Naive thymus-derived CD4-positive, alpha-beta T cell (primary cell): ENCODE measurements at regions of chr4 and their contacts with region 1.

Region 1: DNA sequence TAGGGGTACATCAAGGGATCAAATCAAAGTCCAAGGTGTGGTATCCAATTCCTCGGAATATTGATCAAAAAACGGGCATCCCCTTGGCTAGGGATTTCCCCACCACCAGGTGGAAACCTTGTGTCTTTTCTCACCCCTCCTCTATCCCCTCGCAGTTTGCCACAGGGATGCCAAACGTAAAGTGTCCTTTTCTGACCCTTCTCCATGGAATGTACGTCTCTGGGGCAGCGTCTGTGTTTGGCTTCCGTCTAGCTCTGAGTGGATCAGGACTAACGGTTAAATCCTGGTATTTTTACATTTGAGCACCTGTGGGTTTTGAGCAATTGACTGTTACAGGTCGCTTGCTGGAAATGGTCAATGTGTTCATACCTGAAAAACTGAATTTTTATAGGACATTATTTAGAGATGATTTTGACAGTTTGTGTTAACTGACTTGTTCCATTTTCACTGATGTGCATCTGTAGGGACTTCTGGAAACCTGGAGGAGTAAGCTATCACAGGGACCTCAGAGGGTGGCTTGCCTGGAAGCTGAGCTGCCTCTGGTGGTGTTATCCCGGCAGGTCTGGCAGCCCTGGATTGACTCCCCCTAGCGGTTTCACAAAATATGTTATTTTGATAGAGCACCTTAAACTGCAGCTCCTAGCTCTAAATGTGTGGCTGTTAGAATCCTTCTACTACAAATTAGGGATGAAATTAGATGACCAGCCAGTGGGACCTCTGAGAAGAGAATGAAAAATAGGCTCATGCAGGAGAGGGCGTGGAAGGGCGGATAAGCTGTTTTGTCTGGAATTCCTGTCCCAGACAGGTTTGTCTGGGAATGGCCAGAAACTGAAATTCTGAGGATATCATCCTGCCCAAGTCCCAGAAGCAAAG is 8.8 kb upstream of the MGST2 start:
- DNase-seq: peak in 8 of 9 donors; percentile 29 to 67 (median 56)
- ATAC-seq: peak; percentile 87
- H3K4me3 ChIP-seq: no peak overlapping the region
- H3K4me3 Mint-ChIP-seq: peak overlapping the region in 8 of 10 donors; percentile 5 to 86 (median 22)
- H3K27ac ChIP-seq: no peak overlapping the region
- H3K27ac Mint-ChIP-seq: peak overlapping the region in 5 of 9 donors; percentile 31 to 98 (median 87)
- H3K4me1 ChIP-seq: peaks cover 0 to 5% of the 10 kb centered on the region in 2 donors
- H3K4me1 Mint-ChIP-seq: peaks cover 17 to 41% (median 18%) of the 10 kb centered on the region in 7 donors
- H3K27me3 ChIP-seq: no peaks in the 10 kb centered on the region
- H3K27me3 Mint-ChIP-seq: peaks cover 0 to 5% (median 5%) of the 10 kb centered on the region in 5 donors

Region 2: GRCh38 chr4:139416073-139416673 is 240.7 kb before region 1 on chr4:
- CTCF ChIA-PET with region 1: interaction called, 3 read pairs
- POLR2A ChIA-PET with region 1: no interaction called
- intact Hi-C with region 1: loop called in 1 of 2 experiments (anchors 5 kb)
- DNase-seq: peak in 6 of 9 donors; percentile 5 to 46 (median 43)
- ATAC-seq: peak; percentile 72
- H3K4me3 ChIP-seq: no peak overlapping the region
- H3K4me3 Mint-ChIP-seq: no peak overlapping the region
- H3K27ac ChIP-seq: no peak overlapping the region
- H3K27ac Mint-ChIP-seq: no peak overlapping the region
- H3K4me1 ChIP-seq: no peaks in the 10 kb centered on the region
- H3K4me1 Mint-ChIP-seq: peaks cover 0 to 19% (median 12%) of the 10 kb centered on the region in 7 donors
- H3K27me3 ChIP-seq: no peaks in the 10 kb centered on the region
- H3K27me3 Mint-ChIP-seq: no peaks in the 10 kb centered on the region

Region 3: GRCh38 chr4:139768896-139769295 is 112.0 kb after region 1 on chr4:
- CTCF ChIA-PET with region 1: no interaction called
- POLR2A ChIA-PET with region 1: no interaction called
- intact Hi-C with region 1: loop called in 1 of 2 experiments (anchors 2 kb)
- DNase-seq: no peak
- ATAC-seq: no peak
- H3K4me3 ChIP-seq: no peak overlapping the region
- H3K4me3 Mint-ChIP-seq: no peak overlapping the region
- H3K27ac ChIP-seq: no peak overlapping the region
- H3K27ac Mint-ChIP-seq: no peak overlapping the region
- H3K4me1 ChIP-seq: no peaks in the 10 kb centered on the region
- H3K4me1 Mint-ChIP-seq: no peaks in the 10 kb centered on the region
- H3K27me3 ChIP-seq: no peaks in the 10 kb centered on the region
- H3K27me3 Mint-ChIP-seq: peaks cover 0 to 6% (median 0%) of the 10 kb centered on the region in 5 donors

Region 4: DNA sequence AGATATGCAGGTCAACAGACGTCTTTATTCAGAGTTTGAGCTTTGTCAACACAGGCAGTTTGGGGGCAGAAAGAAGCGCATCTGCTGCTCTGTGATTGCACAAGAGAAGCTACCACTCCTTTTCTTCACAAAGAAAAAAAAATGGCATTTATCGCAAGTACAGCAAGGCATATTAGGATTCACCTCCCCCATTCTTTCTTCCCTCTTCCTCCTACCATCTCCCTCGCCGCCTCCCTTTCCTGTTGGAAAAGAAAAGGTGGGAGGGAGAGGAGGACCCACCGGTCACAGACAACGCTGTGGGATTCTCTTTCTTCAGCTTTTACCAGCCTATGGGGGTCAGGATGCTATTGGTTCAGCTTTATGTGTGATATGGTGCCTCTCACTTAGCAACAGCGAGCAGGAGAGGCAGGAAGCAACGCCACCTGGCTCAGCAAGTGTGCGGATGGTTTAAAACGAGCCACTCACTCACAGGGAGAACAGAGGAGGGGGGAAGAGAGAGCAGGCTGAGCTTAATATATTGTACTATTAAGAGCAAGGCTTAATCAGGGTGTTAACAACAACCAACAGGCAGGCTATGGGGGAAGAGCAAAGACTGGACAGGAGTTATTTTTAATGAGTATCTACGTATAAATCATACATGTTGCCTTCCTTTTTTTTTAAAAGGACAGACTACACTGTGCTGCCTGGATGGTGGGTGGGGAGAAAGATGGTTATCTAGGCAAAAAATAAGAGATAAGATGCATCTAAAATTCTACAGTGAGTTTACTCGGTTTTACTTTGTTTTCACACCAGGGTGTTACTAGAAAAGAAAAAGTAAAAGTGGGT is 392.4 kb after region 1 on chr4:
- CTCF ChIA-PET with region 1: no interaction called
- POLR2A ChIA-PET with region 1: no interaction called
- intact Hi-C with region 1: loop called in 1 of 2 experiments (anchors 5 kb)
- DNase-seq: peak in 8 of 9 donors; percentile 13 to 73 (median 61)
- ATAC-seq: peak; percentile 92
- H3K4me3 ChIP-seq: peak overlapping the region; percentile 45
- H3K4me3 Mint-ChIP-seq: peak overlapping the region; percentile 76 to 93 (median 86)
- H3K27ac ChIP-seq: peak overlapping the region; percentile 46
- H3K27ac Mint-ChIP-seq: peak overlapping the region; percentile 77 to 94 (median 82)
- H3K4me1 ChIP-seq: peaks cover 3 to 14% of the 10 kb centered on the region in 2 donors
- H3K4me1 Mint-ChIP-seq: peaks cover 7 to 60% (median 41%) of the 10 kb centered on the region in 7 donors
- H3K27me3 ChIP-seq: no peaks in the 10 kb centered on the region
- H3K27me3 Mint-ChIP-seq: peaks cover 0 to 64% (median 0%) of the 10 kb centered on the region in 5 donors

Region 5: DNA sequence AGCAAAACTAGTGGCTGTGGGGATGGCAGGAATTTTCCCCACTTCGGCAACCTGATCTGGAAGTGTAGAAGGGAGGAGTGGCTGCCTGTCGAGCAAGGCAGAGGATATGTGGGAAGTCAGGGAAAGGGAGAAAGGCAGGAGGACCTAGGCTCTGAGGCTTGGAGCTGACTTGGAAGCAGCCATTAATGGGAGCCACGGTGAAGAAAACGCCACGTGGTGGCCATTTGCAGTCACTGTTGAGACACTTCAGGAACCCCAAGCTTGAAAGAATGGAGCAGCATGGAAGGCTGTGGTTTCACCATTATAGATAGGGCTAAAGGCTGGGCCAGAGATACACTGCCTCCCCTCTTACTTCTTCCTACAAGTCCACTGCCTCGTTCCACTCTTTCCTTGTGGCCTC is 539.0 kb after region 1 on chr4:
- CTCF ChIA-PET with region 1: no interaction called
- POLR2A ChIA-PET with region 1: no interaction called
- intact Hi-C with region 1: no loop called
- DNase-seq: no peak
- ATAC-seq: no peak
- H3K4me3 ChIP-seq: no peak overlapping the region
- H3K4me3 Mint-ChIP-seq: no peak overlapping the region
- H3K27ac ChIP-seq: no peak overlapping the region
- H3K27ac Mint-ChIP-seq: no peak overlapping the region
- H3K4me1 ChIP-seq: no peaks in the 10 kb centered on the region
- H3K4me1 Mint-ChIP-seq: no peaks in the 10 kb centered on the region
- H3K27me3 ChIP-seq: no peaks in the 10 kb centered on the region
- H3K27me3 Mint-ChIP-seq: peaks cover 0 to 44% (median 15%) of the 10 kb centered on the region in 5 donors

Region 6: DNA sequence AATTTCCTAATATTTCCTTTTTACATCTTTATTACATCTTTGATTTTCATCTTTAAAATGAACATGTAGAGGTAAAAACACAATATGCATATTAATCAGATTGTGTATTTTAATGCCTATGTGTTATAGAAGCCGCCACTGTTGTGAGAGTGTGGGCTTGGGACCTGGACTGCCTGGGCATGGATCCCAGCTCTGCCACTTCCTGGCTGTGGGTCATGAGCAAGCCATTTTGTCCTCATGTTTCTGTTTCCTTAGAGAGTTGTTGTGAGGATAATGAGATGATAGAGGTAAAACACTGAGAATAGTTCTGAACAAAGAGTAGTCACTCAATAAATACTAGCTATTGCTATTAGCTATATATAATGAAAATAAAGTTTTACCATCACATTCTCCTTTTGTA is 678.2 kb after region 1 on chr4:
- CTCF ChIA-PET with region 1: no interaction called
- POLR2A ChIA-PET with region 1: no interaction called
- intact Hi-C with region 1: no loop called
- DNase-seq: no peak
- ATAC-seq: no peak
- H3K4me3 ChIP-seq: no peak overlapping the region
- H3K4me3 Mint-ChIP-seq: no peak overlapping the region
- H3K27ac ChIP-seq: no peak overlapping the region
- H3K27ac Mint-ChIP-seq: no peak overlapping the region
- H3K4me1 ChIP-seq: no peaks in the 10 kb centered on the region
- H3K4me1 Mint-ChIP-seq: peaks cover 0 to 8% (median 3%) of the 10 kb centered on the region in 7 donors
- H3K27me3 ChIP-seq: no peaks in the 10 kb centered on the region
- H3K27me3 Mint-ChIP-seq: peaks cover 4 to 15% (median 8%) of the 10 kb centered on the region in 5 donors

Region 7: GRCh38 chr4:140359562-140360427 is 702.9 kb after region 1 on chr4:
- CTCF ChIA-PET with region 1: no interaction called
- POLR2A ChIA-PET with region 1: no interaction called
- intact Hi-C with region 1: loop called in 1 of 2 experiments (anchors 5 kb)
- DNase-seq: peak; percentile 42 to 80 (median 71)
- ATAC-seq: peak; percentile 95
- H3K4me3 ChIP-seq: no peak overlapping the region
- H3K4me3 Mint-ChIP-seq: peak overlapping the region in 2 of 10 donors; percentile 20 to 43
- H3K27ac ChIP-seq: no peak overlapping the region
- H3K27ac Mint-ChIP-seq: peak overlapping the region in 1 of 9 donors; percentile 42
- H3K4me1 ChIP-seq: no peaks in the 10 kb centered on the region
- H3K4me1 Mint-ChIP-seq: peaks cover 0 to 5% (median 3%) of the 10 kb centered on the region in 7 donors
- H3K27me3 ChIP-seq: no peaks in the 10 kb centered on the region
- H3K27me3 Mint-ChIP-seq: peaks cover 0 to 18% (median 0%) of the 10 kb centered on the region in 5 donors